Endothelial cell of umbilical vein (primary cell): ENCODE measurements at regions of chr11 and their contacts with region 1.

Region 1: DNA sequence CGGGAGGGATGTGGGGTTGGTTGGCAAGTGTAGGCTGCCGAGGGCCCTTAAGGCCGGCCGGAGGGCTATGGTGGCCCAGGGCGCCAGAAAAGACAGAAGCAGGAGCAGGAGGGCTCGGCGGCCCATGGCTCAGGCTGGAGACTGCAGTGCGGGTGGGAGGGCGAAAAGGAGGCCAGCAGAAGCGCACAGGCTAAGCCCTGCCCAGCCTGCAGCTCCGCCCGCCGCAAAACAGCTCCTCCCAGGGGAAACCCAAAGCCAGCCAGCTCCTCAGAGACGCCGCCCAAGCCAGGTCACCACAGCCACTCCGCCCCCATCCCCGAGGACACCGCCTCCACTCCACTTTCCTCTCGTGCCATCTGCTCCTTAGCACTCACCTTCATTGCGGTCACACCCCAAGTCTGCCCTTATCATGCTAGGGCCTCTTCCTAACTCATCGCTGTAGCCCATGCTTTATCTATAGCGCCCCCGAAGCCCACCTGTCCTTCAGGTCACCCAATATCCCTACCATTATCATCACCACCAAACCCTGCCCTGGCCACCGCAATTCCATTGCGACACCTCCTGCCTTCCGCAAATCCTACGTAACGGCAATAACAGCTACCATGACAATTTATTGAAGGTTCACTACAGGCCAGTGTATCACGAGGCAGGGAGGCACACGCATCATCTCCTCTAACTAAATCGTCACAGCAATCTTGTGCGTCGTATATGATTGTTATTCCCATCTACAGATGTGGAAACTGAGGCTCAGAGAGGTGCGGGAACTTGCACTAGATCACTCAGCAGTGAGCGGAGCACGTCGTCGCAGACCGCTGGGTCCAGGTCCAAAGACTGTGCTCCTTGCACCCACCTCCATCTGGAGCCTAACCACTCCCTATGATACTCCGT is at the start of gene PRCP:
- DNase-seq: peak; percentile 91
- H3K4me3 ChIP-seq: peak within 1 kb of the TSS; percentile 34 to 75 (median 50)
- H3K27ac ChIP-seq: peak within 1 kb of the TSS; percentile 52
- H3K4me1 ChIP-seq: peaks cover 32% of the 10 kb centered on the region
- H3K27me3 ChIP-seq: no peaks in the 10 kb centered on the region
- CTCF ChIP-seq: no peak
- POLR2A ChIP-seq: peak; percentile 96
- total RNA-seq, gene PRCP: 149 and 170 TPM in 2 replicates

Region 2: DNA sequence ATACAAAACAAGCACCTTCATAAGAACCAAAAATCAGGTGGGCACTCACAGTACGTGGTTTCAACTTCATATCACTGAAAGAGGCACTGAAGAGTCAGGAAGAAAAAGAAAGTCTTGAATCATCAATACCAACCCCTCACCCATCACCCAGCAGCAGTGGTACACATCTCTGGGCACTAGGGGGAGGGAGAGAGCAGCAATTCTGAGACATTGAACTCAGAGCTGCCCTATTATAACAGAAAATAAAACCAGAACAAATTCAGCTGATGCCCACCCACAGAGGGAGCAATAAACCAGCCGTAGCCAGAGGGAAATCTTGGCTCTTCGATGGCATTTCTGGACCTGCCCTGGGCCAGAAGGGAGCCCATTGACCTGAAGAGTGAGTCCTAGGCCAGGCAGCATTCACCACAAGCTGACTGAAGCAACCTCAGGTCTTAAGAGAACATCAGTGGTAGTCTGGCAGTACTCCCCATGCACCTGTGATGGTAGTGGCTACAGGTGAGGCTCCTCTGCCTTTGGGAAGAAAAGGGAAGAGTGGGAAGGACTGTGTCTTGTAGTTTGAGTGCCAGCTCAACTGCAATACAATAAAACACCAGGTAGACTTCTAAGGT is 124.7 kb before region 1 on chr11:
- CTCF ChIA-PET with region 1: interaction called, 31 read pairs
- POLR2A ChIA-PET with region 1: no interaction called
- dilution Hi-C with region 1: no loop called
- intact Hi-C with region 1: loop called (anchors 1 kb)
- DNase-seq: peak; percentile 85
- H3K4me3 ChIP-seq: no peak overlapping the region
- H3K27ac ChIP-seq: no peak overlapping the region
- H3K4me1 ChIP-seq: peaks cover 2% of the 10 kb centered on the region
- H3K27me3 ChIP-seq: no peaks in the 10 kb centered on the region
- CTCF ChIP-seq: peak; percentile 86 to 95
- POLR2A ChIP-seq: no peak

Region 3: DNA sequence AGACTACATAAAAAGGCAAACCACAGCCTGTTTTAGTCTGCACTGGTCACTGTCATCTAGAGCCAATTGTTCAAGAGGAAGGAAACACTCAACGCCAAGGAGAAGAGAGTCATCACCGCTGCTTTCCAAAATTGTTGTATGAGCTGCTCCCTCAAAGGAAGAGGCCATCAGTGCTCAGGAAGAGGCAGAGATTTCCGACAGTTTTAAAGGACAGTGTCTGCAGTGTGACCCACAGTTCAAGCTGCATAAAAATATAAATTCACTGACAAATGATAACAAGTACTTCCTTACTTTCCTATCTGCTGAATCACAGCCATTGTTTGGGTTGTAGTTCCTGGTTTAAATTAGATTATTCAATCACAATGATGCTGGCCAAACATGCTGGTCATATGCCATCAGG is 16.7 kb before region 1 on chr11:
- CTCF ChIA-PET with region 1: interaction called, 20 read pairs
- POLR2A ChIA-PET with region 1: interaction called, 6 read pairs
- dilution Hi-C with region 1: no loop called
- intact Hi-C with region 1: loop called (anchors 1 kb)
- DNase-seq: peak; percentile 94
- H3K4me3 ChIP-seq: no peak overlapping the region
- H3K27ac ChIP-seq: peak overlapping the region; percentile 68
- H3K4me1 ChIP-seq: peaks cover 38% of the 10 kb centered on the region
- H3K27me3 ChIP-seq: no peaks in the 10 kb centered on the region
- CTCF ChIP-seq: no peak
- POLR2A ChIP-seq: peak; percentile 66

Region 4: DNA sequence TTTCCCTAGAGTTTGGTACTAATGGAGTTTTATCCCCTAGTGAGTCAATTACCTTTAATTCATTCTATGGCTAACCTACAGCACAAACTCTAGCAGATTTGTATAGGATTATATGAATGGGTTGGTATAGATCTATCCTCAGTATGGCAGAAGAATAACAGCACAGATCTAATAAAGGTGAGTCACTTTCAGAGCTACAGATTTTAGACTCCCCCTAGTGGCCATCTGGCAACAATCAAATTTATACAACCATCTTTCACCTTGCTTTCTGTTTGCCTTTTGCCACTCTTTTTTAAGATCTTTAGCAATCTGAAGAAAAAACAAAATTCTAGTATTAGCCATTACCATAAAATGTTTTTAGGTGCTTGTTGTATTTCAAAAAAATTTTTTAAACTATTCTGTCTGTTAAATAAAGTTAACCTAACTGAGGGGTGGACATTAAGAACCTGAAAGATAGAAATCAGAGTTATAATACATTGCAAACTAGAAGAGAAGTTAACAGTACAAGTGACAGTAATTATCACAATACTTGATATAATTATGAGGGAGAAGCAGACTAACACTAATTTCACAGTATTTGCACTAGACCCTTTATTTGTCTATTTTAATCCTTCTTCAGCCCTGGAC is 26.8 kb after region 1 on chr11:
- CTCF ChIA-PET with region 1: interaction called, 12 read pairs
- POLR2A ChIA-PET with region 1: interaction called, 4 read pairs
- dilution Hi-C with region 1: no loop called
- intact Hi-C with region 1: no loop called
- DNase-seq: peak; percentile 59
- H3K4me3 ChIP-seq: no peak overlapping the region
- H3K27ac ChIP-seq: no peak overlapping the region
- H3K4me1 ChIP-seq: peaks cover 16% of the 10 kb centered on the region
- H3K27me3 ChIP-seq: no peaks in the 10 kb centered on the region
- CTCF ChIP-seq: peak; percentile 59 to 61
- POLR2A ChIP-seq: no peak

Region 5: DNA sequence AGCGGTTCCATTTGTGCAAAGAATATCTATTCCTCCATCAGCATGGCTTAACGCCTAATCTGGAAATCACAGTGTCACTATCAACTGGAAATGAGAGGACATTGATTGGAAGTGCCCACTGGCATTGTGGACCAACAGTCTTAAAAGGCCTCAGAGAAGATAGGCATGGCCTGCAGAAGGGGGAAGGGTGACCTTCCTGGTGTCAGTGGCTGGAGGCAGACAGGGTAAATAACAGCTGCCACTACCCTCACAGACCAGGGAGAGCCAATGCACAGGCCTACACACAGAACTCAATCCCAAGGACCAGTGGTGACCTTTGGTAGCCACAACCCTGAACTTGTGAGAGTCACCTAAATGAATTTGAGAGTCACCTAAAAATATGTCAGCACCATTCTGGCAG is 37.0 kb after region 1 on chr11:
- CTCF ChIA-PET with region 1: no interaction called
- POLR2A ChIA-PET with region 1: no interaction called
- dilution Hi-C with region 1: no loop called
- intact Hi-C with region 1: no loop called
- DNase-seq: no peak
- H3K4me3 ChIP-seq: no peak overlapping the region
- H3K27ac ChIP-seq: no peak overlapping the region
- H3K4me1 ChIP-seq: peaks cover 6% of the 10 kb centered on the region
- H3K27me3 ChIP-seq: no peaks in the 10 kb centered on the region
- CTCF ChIP-seq: no peak
- POLR2A ChIP-seq: no peak

Region 6: GRCh38 chr11:83051760-83052671 is 151.5 kb after region 1 on chr11:
- CTCF ChIA-PET with region 1: no interaction called
- POLR2A ChIA-PET with region 1: no interaction called
- dilution Hi-C with region 1: no loop called
- intact Hi-C with region 1: no loop called
- DNase-seq: peak; percentile 94
- H3K4me3 ChIP-seq: no peak overlapping the region
- H3K27ac ChIP-seq: peak overlapping the region; percentile 88
- H3K4me1 ChIP-seq: peaks cover 59% of the 10 kb centered on the region
- H3K27me3 ChIP-seq: no peaks in the 10 kb centered on the region
- CTCF ChIP-seq: no peak
- POLR2A ChIP-seq: no peak

Region 7: DNA sequence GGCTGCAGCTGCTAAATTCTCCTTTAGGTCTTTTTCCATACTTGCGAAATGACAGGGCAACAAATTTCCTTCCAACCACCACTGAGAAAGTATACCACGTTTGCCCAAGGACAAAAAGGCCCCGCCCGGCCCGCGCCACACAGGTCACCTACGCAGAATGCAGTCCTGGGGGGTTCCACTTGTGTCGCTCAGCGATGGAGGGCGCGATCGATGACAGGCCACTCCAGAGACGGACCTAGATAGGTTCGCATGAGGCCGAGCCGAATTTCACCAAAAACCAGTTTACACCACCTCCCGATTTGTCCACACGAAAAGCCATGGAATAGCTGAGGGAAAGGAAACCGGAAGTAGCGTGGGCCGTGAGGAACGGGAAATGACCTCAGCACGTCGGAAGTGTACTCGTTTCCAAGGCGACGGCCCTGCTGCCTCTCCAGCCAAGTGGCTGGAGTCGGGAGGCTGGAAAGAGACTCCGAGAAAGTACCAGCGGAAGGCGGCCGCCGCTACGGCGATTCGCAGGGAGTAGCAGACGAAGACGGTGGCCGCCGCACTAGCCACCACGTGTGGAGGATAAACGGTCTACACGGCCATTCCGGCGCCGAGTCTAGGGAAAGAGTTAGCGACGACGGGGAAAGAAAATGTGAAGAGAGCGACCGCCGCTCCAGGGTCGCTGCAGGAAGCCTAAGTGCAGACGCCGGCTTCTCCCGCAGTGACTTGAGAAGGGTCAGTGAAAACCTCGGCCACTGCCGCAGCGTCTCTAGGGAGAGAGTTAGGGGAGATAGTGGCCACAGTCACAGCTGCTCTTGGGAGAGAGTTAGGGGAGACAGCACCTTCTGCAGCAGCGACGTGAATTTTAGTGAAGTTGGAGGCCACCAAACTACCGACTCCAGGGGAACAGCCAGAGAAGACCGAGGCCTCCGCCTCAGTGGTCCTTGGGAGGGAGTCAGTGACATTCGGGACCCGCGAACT is 293.1 kb after region 1 on chr11 and contains the start of gene ANKRD42:
- CTCF ChIA-PET with region 1: interaction called, 4 read pairs
- POLR2A ChIA-PET with region 1: no interaction called
- dilution Hi-C with region 1: no loop called
- intact Hi-C with region 1: loop called (anchors 1 kb)
- DNase-seq: peak; percentile 96
- H3K4me3 ChIP-seq: peak within 1 kb of the TSS; percentile 31 to 87 (median 83)
- H3K27ac ChIP-seq: peak within 1 kb of the TSS; percentile 72
- H3K4me1 ChIP-seq: peaks cover 17% of the 10 kb centered on the region
- H3K27me3 ChIP-seq: no peaks in the 10 kb centered on the region
- CTCF ChIP-seq: no peak
- POLR2A ChIP-seq: peak; percentile 92
- total RNA-seq, gene ANKRD42: 6.6 and 7.6 TPM in 2 replicates

Region 8: GRCh38 chr11:83285771-83286528 is 385.4 kb after region 1 on chr11 and contains the start of gene CCDC90B:
- CTCF ChIA-PET with region 1: interaction called, 3 read pairs
- POLR2A ChIA-PET with region 1: no interaction called
- dilution Hi-C with region 1: no loop called
- intact Hi-C with region 1: loop called (anchors 10 kb)
- DNase-seq: peak; percentile 98
- H3K4me3 ChIP-seq: peak within 1 kb of the TSS; percentile 47 to 100 (median 85)
- H3K27ac ChIP-seq: peak within 1 kb of the TSS; percentile 86
- H3K4me1 ChIP-seq: peaks cover 9% of the 10 kb centered on the region
- H3K27me3 ChIP-seq: peaks cover 0 to under 1% of the 10 kb centered on the region in 2 experiments
- CTCF ChIP-seq: peak; percentile 17 to 24
- POLR2A ChIP-seq: peak; percentile 92
- total RNA-seq, gene CCDC90B: 45.8 and 49.6 TPM in 2 replicates